Lower leg skin (tissue), 4 donors: ENCODE measurements at regions of chr1 and their contacts with region 1.

Region 1: GRCh38 chr1:224828691-224829090 is 100.8 kb upstream of the DNAH14 start:
- DNase-seq: no peak
- H3K4me3 ChIP-seq: no peak overlapping the region
- CTCF ChIP-seq: no peak
- POLR2A ChIP-seq: no peak

Region 2: GRCh38 chr1:224710196-224710595 is 118.5 kb before region 1 on chr1:
- intact Hi-C with region 1: loop called (anchors 10 kb)
- DNase-seq: no peak
- H3K4me3 ChIP-seq: no peak overlapping the region
- CTCF ChIP-seq: no peak
- POLR2A ChIP-seq: no peak